ENCODE measurements at regions of chr18 and their contacts with region 1.

Region 1: GRCh38 chr18:59837586-59837985 is 62.2 kb upstream of the PMAIP1 start:
- DNase-seq: peak; percentile 70
- CTCF ChIP-seq: peak; percentile 81

Region 2: GRCh38 chr18:59308248-59308937 is 529.2 kb before region 1 on chr18:
- in situ Hi-C with region 1: no loop called
- DNase-seq: peak; percentile 86
- CTCF ChIP-seq: peak; percentile 95

Region 3: GRCh38 chr18:59623456-59624368 is 213.9 kb before region 1 on chr18:
- in situ Hi-C with region 1: no loop called
- DNase-seq: no peak
- CTCF ChIP-seq: no peak

Region 4: GRCh38 chr18:59881728-59882656 is 44.4 kb after region 1 on chr18:
- in situ Hi-C with region 1: loop called (anchors 5 kb)
- DNase-seq: no peak
- CTCF ChIP-seq: no peak

Region 5: DNA sequence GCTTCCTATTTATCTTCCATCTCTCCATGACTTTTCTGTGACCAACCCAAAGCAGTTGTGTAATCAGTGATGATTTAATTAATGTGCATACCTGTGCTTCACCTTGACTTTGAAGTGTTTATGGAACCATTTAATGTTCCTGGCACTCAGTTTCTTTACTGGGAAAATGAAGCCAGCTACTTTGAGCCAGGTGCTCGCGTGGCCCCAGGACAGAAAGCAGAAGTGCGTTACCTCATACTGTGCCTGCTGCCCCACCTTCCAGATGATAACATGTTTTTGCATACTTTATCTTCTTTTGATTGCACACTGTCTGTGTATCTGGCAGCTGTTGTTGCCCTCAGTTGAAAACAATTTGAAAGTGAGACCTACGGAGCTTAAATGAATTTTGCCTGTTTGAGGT is 123.5 kb after region 1 on chr18:
- in situ Hi-C with region 1: loop called (anchors 10 kb)
- DNase-seq: peak; percentile 58
- CTCF ChIP-seq: no peak

Measured in GM13976 (cell line).